Activated CD4-positive, alpha-beta T cell treated with anti-CD3 and anti-CD28 coated beads for 36 hours (primary cell): ENCODE measurements at regions of chr1 and their contacts with region 1.

Region 1: DNA sequence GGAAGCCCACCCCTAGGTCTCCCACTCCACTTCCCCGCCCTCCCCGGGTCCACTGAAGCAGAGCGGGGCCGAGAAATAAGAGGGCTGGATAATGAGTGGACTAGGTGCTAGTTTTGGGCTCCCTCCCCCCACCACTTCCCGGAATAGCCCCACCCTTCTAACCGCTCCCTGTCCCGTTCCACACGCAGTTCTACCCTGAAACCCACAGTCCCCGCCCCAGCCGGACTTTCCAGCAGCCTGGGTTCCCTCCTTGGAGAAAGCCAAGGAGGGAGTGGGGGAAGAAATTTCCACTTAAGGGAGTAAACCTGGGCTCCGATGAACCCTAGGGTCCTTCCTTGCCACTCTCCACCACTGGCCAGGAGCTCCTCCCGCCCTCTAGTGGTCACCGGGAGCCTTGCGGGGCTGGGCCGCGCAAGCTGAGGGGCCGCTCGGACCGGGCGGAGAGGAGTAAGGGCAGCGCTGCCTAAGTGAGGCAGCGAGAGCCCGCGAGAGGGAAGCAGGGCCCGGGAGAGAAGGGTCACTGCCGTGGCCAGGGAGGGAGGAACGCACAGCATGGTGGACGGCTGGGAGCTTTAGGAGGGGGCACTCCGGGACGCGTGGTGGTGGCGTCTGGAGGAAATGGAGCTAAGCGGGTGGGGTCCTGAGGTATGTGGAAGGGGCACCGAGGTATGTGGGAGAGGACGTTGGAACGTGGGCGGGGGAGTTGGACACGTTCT is 14.3 kb downstream of the THBS3 start:
- DNase-seq: peak; percentile 89
- ATAC-seq: peak; percentile 62
- H3K4me3 Mint-ChIP-seq: peak overlapping the region; percentile 94
- H3K27ac Mint-ChIP-seq: peak overlapping the region; percentile 96
- H3K4me1 Mint-ChIP-seq: peaks cover 31% of the 10 kb centered on the region
- H3K27me3 Mint-ChIP-seq: no peaks in the 10 kb centered on the region

Region 2: GRCh38 chr1:155091071-155091709 is 102.2 kb before region 1 on chr1:
- CTCF ChIA-PET with region 1: interaction called, 10 read pairs
- POLR2A ChIA-PET with region 1: no interaction called
- intact Hi-C with region 1: no loop called
- DNase-seq: peak; percentile 90
- ATAC-seq: peak; percentile 88
- H3K4me3 Mint-ChIP-seq: no peak overlapping the region
- H3K27ac Mint-ChIP-seq: no peak overlapping the region
- H3K4me1 Mint-ChIP-seq: peaks cover 7% of the 10 kb centered on the region
- H3K27me3 Mint-ChIP-seq: peaks cover 6% of the 10 kb centered on the region

Region 3: GRCh38 chr1:155172732-155173477 is 20.5 kb before region 1 on chr1 and contains the start of gene KRTCAP2:
- CTCF ChIA-PET with region 1: interaction called, 75 read pairs
- POLR2A ChIA-PET with region 1: interaction called, 17 read pairs
- intact Hi-C with region 1: loop called (anchors 1 to 2 kb)
- DNase-seq: peak; percentile 97
- ATAC-seq: peak; percentile 83
- H3K4me3 Mint-ChIP-seq: peak within 1 kb of the TSS; percentile 98
- H3K27ac Mint-ChIP-seq: peak within 1 kb of the TSS; percentile 96
- H3K4me1 Mint-ChIP-seq: peaks cover 52% of the 10 kb centered on the region
- H3K27me3 Mint-ChIP-seq: no peaks in the 10 kb centered on the region
- total RNA-seq, gene KRTCAP2: 125 to 300 TPM

Region 4: GRCh38 chr1:155227261-155228095 is 34.0 kb after region 1 on chr1:
- CTCF ChIA-PET with region 1: interaction called, 9 read pairs
- POLR2A ChIA-PET with region 1: interaction called, 4 read pairs
- intact Hi-C with region 1: loop called in 1 of 2 experiments (anchors 1 kb)
- DNase-seq: peak; percentile 99
- ATAC-seq: peak; percentile 98
- H3K4me3 Mint-ChIP-seq: peak overlapping the region; percentile 96
- H3K27ac Mint-ChIP-seq: peak overlapping the region; percentile 97
- H3K4me1 Mint-ChIP-seq: peaks cover 27% of the 10 kb centered on the region
- H3K27me3 Mint-ChIP-seq: no peaks in the 10 kb centered on the region

Region 5: DNA sequence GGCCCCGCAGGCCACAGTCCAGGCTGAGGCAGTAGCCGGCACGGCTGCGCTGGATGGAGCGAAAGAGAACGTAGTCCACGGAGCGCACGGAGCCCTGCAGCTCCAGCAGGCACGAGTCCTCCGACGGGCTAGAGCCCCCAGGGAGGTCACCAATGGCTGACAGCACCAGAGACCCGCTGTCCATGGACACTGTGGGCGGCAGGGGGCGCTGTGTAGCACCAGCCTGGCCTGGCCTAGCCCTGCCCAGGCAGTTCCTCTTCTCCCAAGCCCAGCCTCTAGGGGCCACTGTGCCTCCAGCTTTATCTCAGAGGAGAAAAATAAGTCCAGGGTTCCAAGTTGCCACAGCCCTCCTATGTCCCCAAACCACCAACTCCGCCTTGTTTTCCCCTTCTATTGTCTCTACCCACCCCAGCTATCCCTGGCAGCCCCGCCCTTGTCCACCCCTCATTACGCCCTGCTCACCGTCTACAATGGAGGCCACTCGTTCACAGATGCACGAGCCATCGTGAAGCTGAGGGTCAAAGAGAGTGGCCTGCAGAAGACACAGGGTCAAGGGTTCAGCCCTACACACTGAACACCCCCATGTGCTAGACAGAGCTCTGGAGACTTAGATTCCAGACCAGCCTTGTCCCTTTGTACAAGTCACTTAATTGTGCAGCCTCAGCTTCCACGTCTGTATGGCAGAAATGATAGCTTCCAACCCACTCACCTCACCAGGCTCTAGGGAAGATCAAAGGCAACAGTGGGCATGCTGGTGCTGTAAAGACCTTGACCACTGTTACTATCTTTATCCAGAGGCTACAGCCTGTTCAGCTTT is 57.4 kb after region 1 on chr1:
- CTCF ChIA-PET with region 1: interaction called, 10 read pairs
- POLR2A ChIA-PET with region 1: no interaction called
- intact Hi-C with region 1: no loop called
- DNase-seq: peak; percentile 99
- ATAC-seq: peak; percentile 96
- H3K4me3 Mint-ChIP-seq: peak overlapping the region; percentile 38
- H3K27ac Mint-ChIP-seq: peak overlapping the region; percentile 31
- H3K4me1 Mint-ChIP-seq: peaks cover 25% of the 10 kb centered on the region
- H3K27me3 Mint-ChIP-seq: no peaks in the 10 kb centered on the region